Transverse colon (tissue), 4 donors: ENCODE measurements at regions of chr1 and their contacts with region 1.

Region 1: GRCh38 chr1:154253671-154254070 is 18.8 kb upstream of the HAX1 start:
- DNase-seq: no peak
- H3K4me3 ChIP-seq: no peak overlapping the region
- H3K27ac ChIP-seq: no peak overlapping the region
- H3K4me1 ChIP-seq: no peaks in the 10 kb centered on the region
- H3K27me3 ChIP-seq: no peaks in the 10 kb centered on the region
- CTCF ChIP-seq: no peak
- EP300 ChIP-seq: no peak
- POLR2A ChIP-seq: no peak

Region 2: GRCh38 chr1:154304664-154305337 is 51.1 kb after region 1 on chr1:
- in situ Hi-C with region 1: no loop called
- intact Hi-C with region 1: loop called (anchors 2 kb)
- DNase-seq: no peak
- H3K4me3 ChIP-seq: no peak overlapping the region
- H3K27ac ChIP-seq: no peak overlapping the region
- H3K4me1 ChIP-seq: no peaks in the 10 kb centered on the region
- H3K27me3 ChIP-seq: no peaks in the 10 kb centered on the region
- CTCF ChIP-seq: no peak
- EP300 ChIP-seq: no peak
- POLR2A ChIP-seq: no peak